ENCODE measurements at regions of chr2 and their contacts with region 1.

Region 1: GRCh38 chr2:241271641-241272297 is 43.7 kb downstream of the HDLBP start:
- H3K4me3 Mint-ChIP-seq: peak overlapping the region; percentile 81
- H3K27ac Mint-ChIP-seq: peak overlapping the region; percentile 86
- H3K4me1 Mint-ChIP-seq: peaks cover 65% of the 10 kb centered on the region
- H3K27me3 Mint-ChIP-seq: no peaks in the 10 kb centered on the region

Region 2: GRCh38 chr2:241315093-241315878 is 43.5 kb after region 1 on chr2 and contains the start of gene HDLBP:
- intact Hi-C with region 1: loop called (anchors 2 kb)
- H3K4me3 Mint-ChIP-seq: peak within 1 kb of the TSS; percentile 100
- H3K27ac Mint-ChIP-seq: peak within 1 kb of the TSS; percentile 100
- H3K4me1 Mint-ChIP-seq: peaks cover 72% of the 10 kb centered on the region
- H3K27me3 Mint-ChIP-seq: no peaks in the 10 kb centered on the region

Region 3: DNA sequence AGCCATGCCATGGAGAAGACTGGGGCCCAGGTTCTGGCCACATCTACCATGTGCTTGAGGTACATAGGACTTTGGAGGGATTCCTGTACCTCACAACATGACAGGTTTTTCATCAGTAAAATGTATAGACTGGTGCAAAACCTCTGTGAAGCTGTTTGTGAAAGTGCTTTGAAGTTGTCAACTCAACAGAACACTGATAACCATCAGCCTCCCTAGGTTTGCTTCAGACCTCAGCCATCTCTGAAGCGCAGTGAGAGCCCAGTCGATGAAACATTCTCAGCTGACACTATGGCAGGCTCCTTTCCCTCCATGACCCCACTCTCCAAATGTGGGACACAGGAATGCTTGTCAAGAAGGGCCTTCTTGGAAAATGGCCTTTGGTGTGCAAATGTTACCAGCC is 198.0 kb after region 1 on chr2:
- intact Hi-C with region 1: no loop called
- H3K4me3 Mint-ChIP-seq: no peak overlapping the region
- H3K27ac Mint-ChIP-seq: no peak overlapping the region
- H3K4me1 Mint-ChIP-seq: no peaks in the 10 kb centered on the region
- H3K27me3 Mint-ChIP-seq: peaks cover 82% of the 10 kb centered on the region